ENCODE measurements at regions of chr6 and their contacts with region 1.

Region 1: GRCh38 chr6:128327890-128328289 is 192.5 kb downstream of the PTPRK start:
- DNase-seq: peak; percentile 30
- ATAC-seq: peak; percentile 80
- H3K4me3 Mint-ChIP-seq: no peak overlapping the region
- H3K27ac Mint-ChIP-seq: no peak overlapping the region
- H3K4me1 Mint-ChIP-seq: no peaks in the 10 kb centered on the region
- H3K27me3 Mint-ChIP-seq: no peaks in the 10 kb centered on the region

Region 2: DNA sequence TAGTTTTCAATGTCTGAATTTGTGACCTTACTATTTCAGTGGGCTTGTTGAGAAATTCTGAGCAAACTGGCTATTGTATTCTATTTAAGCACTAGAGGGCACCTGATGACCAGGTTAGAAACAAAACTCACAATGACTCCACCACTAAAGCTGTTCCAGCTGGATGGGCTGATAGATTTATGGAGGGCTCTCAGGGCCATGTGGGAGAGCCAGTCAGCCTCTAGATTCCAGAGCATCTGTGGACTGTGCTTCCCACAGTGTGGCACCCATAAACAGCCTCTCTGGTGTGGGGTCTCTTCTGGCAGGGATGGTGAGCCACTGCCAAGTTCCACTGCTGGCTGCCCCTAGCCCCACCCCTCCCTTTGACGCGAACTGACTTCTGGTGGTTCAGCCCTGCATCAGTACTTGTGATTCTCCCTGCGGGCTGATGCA is 721.7 kb before region 1 on chr6:
- CTCF ChIA-PET with region 1: no interaction called
- POLR2A ChIA-PET with region 1: no interaction called
- intact Hi-C with region 1: loop called in 1 of 2 experiments (anchors 1 kb)
- DNase-seq: no peak
- ATAC-seq: peak; percentile 44
- H3K4me3 Mint-ChIP-seq: no peak overlapping the region
- H3K27ac Mint-ChIP-seq: no peak overlapping the region
- H3K4me1 Mint-ChIP-seq: no peaks in the 10 kb centered on the region
- H3K27me3 Mint-ChIP-seq: no peaks in the 10 kb centered on the region

Region 3: DNA sequence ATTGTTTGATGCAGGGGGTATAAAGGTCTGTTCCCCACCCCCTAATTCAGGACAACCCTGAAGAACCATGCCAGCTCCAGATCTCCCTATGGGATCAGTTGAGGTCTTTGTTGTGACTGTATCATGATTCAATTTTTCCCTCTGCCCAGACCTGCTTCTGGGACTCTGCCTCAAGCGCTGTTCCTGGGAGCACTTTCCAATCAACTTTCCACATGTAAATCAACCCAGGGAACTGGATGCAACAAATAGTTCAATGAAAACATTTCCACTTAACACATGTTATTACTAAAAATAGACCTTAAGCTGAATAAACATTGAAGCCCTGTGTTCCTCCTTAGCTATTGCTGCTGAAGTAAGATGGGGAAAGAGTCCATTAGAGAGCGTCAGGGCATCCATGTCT is 611.4 kb before region 1 on chr6:
- CTCF ChIA-PET with region 1: no interaction called
- POLR2A ChIA-PET with region 1: no interaction called
- intact Hi-C with region 1: loop called in 1 of 2 experiments (anchors 5 kb)
- DNase-seq: no peak
- ATAC-seq: no peak
- H3K4me3 Mint-ChIP-seq: no peak overlapping the region
- H3K27ac Mint-ChIP-seq: no peak overlapping the region
- H3K4me1 Mint-ChIP-seq: peaks cover 11% of the 10 kb centered on the region
- H3K27me3 Mint-ChIP-seq: no peaks in the 10 kb centered on the region

Region 4: GRCh38 chr6:128421788-128422187 is 93.9 kb after region 1 on chr6:
- CTCF ChIA-PET with region 1: no interaction called
- POLR2A ChIA-PET with region 1: no interaction called
- intact Hi-C with region 1: no loop called
- DNase-seq: no peak
- ATAC-seq: no peak
- H3K4me3 Mint-ChIP-seq: no peak overlapping the region
- H3K27ac Mint-ChIP-seq: no peak overlapping the region
- H3K4me1 Mint-ChIP-seq: no peaks in the 10 kb centered on the region
- H3K27me3 Mint-ChIP-seq: no peaks in the 10 kb centered on the region

Region 5: DNA sequence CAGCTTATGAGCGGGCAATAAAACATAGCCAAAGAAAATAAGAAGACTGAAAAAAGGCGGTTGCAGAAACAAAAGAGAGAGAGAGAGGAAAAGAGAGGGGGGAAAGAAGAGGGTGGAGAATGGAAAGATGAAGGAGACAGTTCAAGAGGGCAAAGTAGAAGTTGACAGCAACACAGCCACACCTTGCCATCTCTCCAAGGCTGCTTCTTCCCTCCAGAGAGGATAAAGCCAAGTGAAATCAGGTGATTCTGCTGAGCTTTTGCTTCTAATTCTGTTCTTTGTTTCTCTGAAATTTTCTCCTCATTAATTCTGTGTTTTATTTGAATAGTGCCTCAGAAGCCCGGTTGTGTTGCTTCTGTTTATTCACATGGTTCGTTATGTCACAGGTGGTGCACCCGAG is 144.0 kb after region 1 on chr6:
- CTCF ChIA-PET with region 1: no interaction called
- POLR2A ChIA-PET with region 1: no interaction called
- intact Hi-C with region 1: no loop called
- DNase-seq: no peak
- ATAC-seq: no peak
- H3K4me3 Mint-ChIP-seq: no peak overlapping the region
- H3K27ac Mint-ChIP-seq: no peak overlapping the region
- H3K4me1 Mint-ChIP-seq: no peaks in the 10 kb centered on the region
- H3K27me3 Mint-ChIP-seq: no peaks in the 10 kb centered on the region